Gastrocnemius medialis (tissue), 4 donors: ENCODE measurements at regions of chr1 and their contacts with region 1.

Region 1: DNA sequence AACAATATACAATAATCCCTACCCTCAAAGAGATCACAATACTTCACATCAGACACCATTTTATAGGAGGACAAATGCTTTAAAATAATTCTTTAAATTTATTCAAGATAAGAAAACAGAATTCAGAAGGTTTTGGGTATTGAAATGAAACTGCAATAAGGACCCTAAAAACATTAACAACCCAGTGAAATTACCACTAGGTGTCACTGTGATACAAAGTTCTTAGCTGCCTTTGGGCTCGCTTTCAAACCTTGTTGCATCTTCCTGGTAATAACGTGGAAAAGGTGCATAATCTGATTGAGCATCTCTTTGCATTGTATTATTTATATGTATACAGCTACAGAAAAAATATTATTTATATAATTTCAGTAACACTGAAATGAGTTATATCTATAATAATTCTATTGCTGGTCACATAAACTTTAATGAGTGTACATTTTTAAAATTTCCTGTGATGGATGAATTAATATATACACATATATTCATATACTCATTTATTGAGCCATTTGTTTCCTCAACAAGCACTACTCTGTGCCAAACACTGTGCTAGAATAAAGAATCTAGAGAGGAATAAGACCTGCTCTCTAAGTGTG is 185.2 kb downstream of the FAF1 start:
- DNase-seq: no peak
- ATAC-seq: no peak
- H3K4me3 ChIP-seq: no peak overlapping the region
- H3K27ac ChIP-seq: no peak overlapping the region
- H3K4me1 ChIP-seq: no peaks in the 10 kb centered on the region
- H3K27me3 ChIP-seq: no peaks in the 10 kb centered on the region
- CTCF ChIP-seq: peak; percentile 37 to 75 (median 58)
- POLR2A ChIP-seq: no peak

Region 2: DNA sequence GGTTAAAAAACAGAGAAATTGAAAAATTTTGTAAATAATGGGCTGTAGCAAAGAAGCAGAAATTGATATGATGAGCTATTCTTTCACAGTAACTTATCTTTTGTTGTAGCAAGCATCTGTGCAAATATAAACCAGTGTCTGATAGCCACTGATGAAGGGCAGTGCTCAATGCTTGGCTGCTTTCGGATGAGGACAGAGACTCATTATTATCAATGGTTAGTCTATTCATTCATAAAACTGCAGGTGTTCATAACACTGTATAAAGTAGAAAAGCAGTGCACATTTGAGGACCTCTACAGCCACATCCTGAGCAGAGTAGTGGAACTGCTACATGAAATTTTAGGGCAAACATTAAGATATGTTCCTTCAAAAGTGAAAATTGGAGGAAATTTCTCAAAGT is 78.0 kb after region 1 on chr1:
- in situ Hi-C with region 1: no loop called
- intact Hi-C with region 1: no loop called
- DNase-seq: no peak
- ATAC-seq: no peak
- H3K4me3 ChIP-seq: no peak overlapping the region
- H3K27ac ChIP-seq: no peak overlapping the region
- H3K4me1 ChIP-seq: peaks cover 0 to 4% of the 10 kb centered on the region in 2 donors
- H3K27me3 ChIP-seq: no peaks in the 10 kb centered on the region
- CTCF ChIP-seq: no peak
- POLR2A ChIP-seq: no peak

Region 3: GRCh38 chr1:50929376-50929958 is 154.6 kb after region 1 on chr1:
- in situ Hi-C with region 1: loop called in 1 of 4 experiments (anchors 25 kb)
- intact Hi-C with region 1: loop called (anchors 10 kb)
- DNase-seq: no peak
- ATAC-seq: no peak
- H3K4me3 ChIP-seq: no peak overlapping the region
- H3K27ac ChIP-seq: no peak overlapping the region
- H3K4me1 ChIP-seq: peaks cover 3 to 7% of the 10 kb centered on the region in 2 donors
- H3K27me3 ChIP-seq: no peaks in the 10 kb centered on the region
- CTCF ChIP-seq: peak; percentile 44 to 67 (median 52)
- POLR2A ChIP-seq: no peak

Region 4: GRCh38 chr1:51044834-51045233 is 270.0 kb after region 1 on chr1:
- in situ Hi-C with region 1: loop called (anchors 5 to 25 kb)
- intact Hi-C with region 1: loop called (anchors 1 kb)
- DNase-seq: no peak
- ATAC-seq: no peak
- H3K4me3 ChIP-seq: no peak overlapping the region
- H3K27ac ChIP-seq: no peak overlapping the region
- H3K4me1 ChIP-seq: no peaks in the 10 kb centered on the region
- H3K27me3 ChIP-seq: no peaks in the 10 kb centered on the region
- CTCF ChIP-seq: peak; percentile 17 to 53 (median 48)
- POLR2A ChIP-seq: no peak

Region 5: GRCh38 chr1:51058858-51059257 is 284.0 kb after region 1 on chr1:
- in situ Hi-C with region 1: loop called in 1 of 4 experiments (anchors 5 kb)
- intact Hi-C with region 1: no loop called
- DNase-seq: no peak
- ATAC-seq: no peak
- H3K4me3 ChIP-seq: no peak overlapping the region
- H3K27ac ChIP-seq: no peak overlapping the region
- H3K4me1 ChIP-seq: no peaks in the 10 kb centered on the region
- H3K27me3 ChIP-seq: no peaks in the 10 kb centered on the region
- CTCF ChIP-seq: no peak
- POLR2A ChIP-seq: no peak

Region 6: GRCh38 chr1:51192213-51192843 is 417.5 kb after region 1 on chr1:
- in situ Hi-C with region 1: loop called (anchors 5 to 10 kb)
- intact Hi-C with region 1: loop called (anchors 1 kb)
- DNase-seq: peak; percentile 8 to 24
- ATAC-seq: no peak
- H3K4me3 ChIP-seq: no peak overlapping the region
- H3K27ac ChIP-seq: no peak overlapping the region
- H3K4me1 ChIP-seq: no peaks in the 10 kb centered on the region
- H3K27me3 ChIP-seq: no peaks in the 10 kb centered on the region
- CTCF ChIP-seq: peak; percentile 33 to 81 (median 60)
- POLR2A ChIP-seq: no peak

Region 7: DNA sequence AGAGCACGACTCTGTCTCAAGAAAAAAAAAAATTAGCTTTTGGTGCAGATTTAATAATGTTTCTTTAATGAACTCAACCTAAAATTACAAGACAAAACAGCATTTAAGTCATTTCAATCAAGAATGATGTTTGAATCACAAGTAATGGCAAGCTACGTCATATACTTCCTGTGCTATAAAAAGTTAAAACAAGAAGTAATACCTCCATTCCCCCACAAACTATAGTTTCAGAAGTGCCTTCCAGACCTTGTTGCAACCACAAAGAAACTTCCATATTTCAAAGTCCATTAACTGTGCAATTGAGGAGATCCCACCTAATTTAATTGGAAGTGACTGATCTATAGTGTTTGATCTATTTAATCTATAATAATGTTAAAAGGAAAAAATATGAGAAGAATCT is 1088.5 kb after region 1 on chr1:
- in situ Hi-C with region 1: no loop called
- intact Hi-C with region 1: no loop called
- DNase-seq: no peak
- ATAC-seq: no peak
- H3K4me3 ChIP-seq: no peak overlapping the region
- H3K27ac ChIP-seq: no peak overlapping the region
- H3K4me1 ChIP-seq: peaks cover 38 to 46% of the 10 kb centered on the region in 2 donors
- H3K27me3 ChIP-seq: no peaks in the 10 kb centered on the region
- CTCF ChIP-seq: no peak
- POLR2A ChIP-seq: no peak